ENCODE measurements at regions of chrX and their contacts with region 1.

Region 1: GRCh38 chrX:150833454-150834056 is 64.9 kb downstream of the CD99L2 start:
- DNase-seq: no peak
- ATAC-seq: no peak
- H3K4me3 ChIP-seq: no peak overlapping the region
- H3K27ac ChIP-seq: no peak overlapping the region
- H3K4me1 ChIP-seq: no peaks in the 10 kb centered on the region
- H3K27me3 ChIP-seq: no peaks in the 10 kb centered on the region
- CTCF ChIP-seq: no peak

Region 2: DNA sequence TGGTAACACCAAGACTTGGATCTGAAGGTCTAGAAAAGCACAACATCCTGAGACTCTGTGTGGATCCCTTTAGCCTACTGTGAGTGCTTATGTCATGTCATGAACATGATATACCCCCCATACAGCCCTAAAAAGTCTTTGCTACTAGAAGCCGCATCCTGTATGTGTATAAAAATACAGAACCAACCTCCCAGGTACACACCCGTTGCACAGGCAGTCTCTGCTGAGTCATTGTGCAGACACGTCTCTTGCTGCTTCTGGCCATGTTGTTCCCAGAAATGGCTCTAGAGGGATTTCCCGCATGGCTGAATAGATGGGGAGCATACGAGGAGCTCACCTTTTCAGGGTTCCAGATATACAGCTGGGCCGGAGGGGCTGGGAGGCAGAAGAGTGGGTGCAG is 377.1 kb before region 1 on chrX:
- CTCF ChIA-PET with region 1: no interaction called
- POLR2A ChIA-PET with region 1: no interaction called
- intact Hi-C with region 1: no loop called
- DNase-seq: peak; percentile 2
- ATAC-seq: 0 out of 2 replicates have a peak, but pooled peaks have one; percentile 35
- H3K4me3 ChIP-seq: no peak overlapping the region
- H3K27ac ChIP-seq: no peak overlapping the region
- H3K4me1 ChIP-seq: peaks cover 6% of the 10 kb centered on the region; the same call in 1 of the 2 replicates
- H3K27me3 ChIP-seq: no peaks in the 10 kb centered on the region
- CTCF ChIP-seq: no peak

Region 3: DNA sequence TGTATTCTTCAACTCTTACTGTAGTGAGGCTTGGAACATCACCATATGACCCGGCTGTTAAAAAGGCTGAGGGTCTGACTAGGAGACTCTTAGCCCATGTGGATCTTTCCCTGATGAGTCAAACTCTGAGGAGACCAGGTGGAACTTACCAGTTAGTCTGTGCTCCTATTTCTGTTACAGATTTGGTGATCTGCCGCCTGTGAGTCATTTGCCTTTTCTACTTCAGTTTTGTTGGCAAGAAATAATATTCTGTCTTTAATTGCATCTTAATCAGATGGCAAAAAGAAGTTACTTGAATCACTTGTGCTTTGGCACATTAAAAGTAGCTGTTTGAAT is 216.7 kb before region 1 on chrX:
- CTCF ChIA-PET with region 1: no interaction called
- POLR2A ChIA-PET with region 1: no interaction called
- intact Hi-C with region 1: no loop called
- DNase-seq: no peak
- ATAC-seq: no peak
- H3K4me3 ChIP-seq: no peak overlapping the region
- H3K27ac ChIP-seq: no peak overlapping the region
- H3K4me1 ChIP-seq: no peaks in the 10 kb centered on the region
- H3K27me3 ChIP-seq: no peaks in the 10 kb centered on the region
- CTCF ChIP-seq: no peak

Region 4: DNA sequence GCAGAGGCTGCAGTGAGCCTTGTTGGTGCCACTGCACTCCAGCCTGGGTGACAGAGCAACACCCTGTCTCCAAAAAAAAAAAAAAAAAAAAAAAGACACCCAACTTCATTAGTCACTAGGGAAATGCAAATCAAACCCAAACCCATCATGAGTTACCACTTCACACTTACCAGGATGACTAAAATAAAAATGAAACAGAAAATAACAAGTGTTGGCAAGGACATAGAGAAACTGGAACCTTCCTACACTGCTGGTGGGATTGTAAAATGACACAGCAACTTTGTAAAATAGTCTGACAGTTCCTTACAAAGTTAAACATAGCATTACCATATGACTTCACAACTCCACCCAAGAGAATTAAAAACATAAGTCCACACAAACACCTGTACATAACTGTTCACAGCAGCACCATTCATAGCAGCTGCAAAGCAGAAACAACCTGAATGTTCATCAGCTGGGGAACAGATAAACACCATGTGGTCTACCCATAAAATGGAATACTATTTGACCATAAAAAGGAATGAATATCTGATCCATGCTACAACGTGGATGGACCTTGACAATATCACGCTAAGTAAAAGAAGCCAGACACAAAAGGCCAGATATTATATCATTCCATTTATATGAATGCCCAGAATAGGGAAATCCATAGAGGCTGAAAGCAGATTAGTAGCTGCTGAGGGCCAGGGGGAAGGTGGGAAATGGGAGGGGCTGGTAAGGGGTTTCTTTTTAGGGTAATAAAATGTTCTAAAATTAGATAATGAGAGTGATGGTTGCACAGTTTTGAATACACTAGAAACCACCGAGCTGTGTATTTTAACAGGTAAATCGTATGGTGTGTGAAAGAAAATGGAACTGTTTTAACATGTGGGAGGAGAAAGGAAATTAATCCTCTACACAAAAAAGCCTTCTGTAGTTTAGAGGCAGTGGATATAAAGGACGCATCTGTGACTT is 46.6 kb after region 1 on chrX:
- CTCF ChIA-PET with region 1: no interaction called
- POLR2A ChIA-PET with region 1: no interaction called
- intact Hi-C with region 1: loop called (anchors 10 kb)
- DNase-seq: no peak
- ATAC-seq: no peak
- H3K4me3 ChIP-seq: no peak overlapping the region
- H3K27ac ChIP-seq: no peak overlapping the region
- H3K4me1 ChIP-seq: no peaks in the 10 kb centered on the region
- H3K27me3 ChIP-seq: no peaks in the 10 kb centered on the region
- CTCF ChIP-seq: no peak

Measured in PC-3 (cell line).